T-cell (primary cell): ENCODE measurements at regions of chr11 and their contacts with region 1.

Region 1: GRCh38 chr11:73705053-73705452 is 55.8 kb downstream of the RAB6A start:
- DNase-seq: no peak
- ATAC-seq: no peak
- H3K4me3 ChIP-seq: no peak overlapping the region
- H3K4me3 Mint-ChIP-seq: no peak overlapping the region
- H3K27ac ChIP-seq: no peak overlapping the region
- H3K27ac Mint-ChIP-seq: no peak overlapping the region
- H3K4me1 ChIP-seq: no peaks in the 10 kb centered on the region
- H3K4me1 Mint-ChIP-seq: no peaks in the 10 kb centered on the region
- H3K27me3 ChIP-seq: no peaks in the 10 kb centered on the region
- H3K27me3 Mint-ChIP-seq: no peaks in the 10 kb centered on the region

Region 2: DNA sequence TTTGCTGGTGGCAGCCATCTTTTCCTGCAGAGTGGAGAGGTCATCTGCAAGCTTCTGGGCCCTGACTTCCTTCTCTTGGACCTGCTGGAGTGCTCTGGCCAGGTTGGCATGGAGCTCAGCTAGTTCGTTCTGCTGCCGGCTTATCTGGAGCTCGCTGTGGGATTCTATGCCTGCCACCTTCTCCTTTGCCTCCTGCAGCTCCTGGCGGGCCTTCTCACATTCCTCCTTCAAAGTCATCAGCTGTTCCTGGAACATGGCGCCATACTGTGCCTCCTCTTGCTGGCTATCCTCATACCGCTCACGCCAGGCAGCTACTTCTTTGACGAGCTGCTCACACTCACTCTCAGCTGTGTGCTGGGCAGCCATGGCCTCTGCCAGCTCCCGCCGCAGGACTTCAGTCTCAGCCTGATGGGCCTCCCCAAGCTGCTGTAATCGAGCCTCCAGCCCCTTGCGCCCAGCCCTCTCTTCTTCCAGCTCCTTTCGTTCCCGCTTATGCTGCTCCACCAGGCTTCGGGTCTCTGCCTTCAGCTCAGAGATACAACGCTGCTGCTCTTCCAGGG is 1690.2 kb before region 1 on chr11:
- CTCF ChIA-PET with region 1: interaction called in 1 of 2 experiments, 10 read pairs
- POLR2A ChIA-PET with region 1: no interaction called
- DNase-seq: no peak
- ATAC-seq: no peak
- H3K4me3 ChIP-seq: no peak overlapping the region
- H3K4me3 Mint-ChIP-seq: no peak overlapping the region
- H3K27ac ChIP-seq: no peak overlapping the region
- H3K27ac Mint-ChIP-seq: no peak overlapping the region
- H3K4me1 ChIP-seq: peaks cover 0 to 4% of the 10 kb centered on the region in 2 experiments
- H3K4me1 Mint-ChIP-seq: peaks cover 0 to 30% (median 2%) of the 10 kb centered on the region in 3 donors
- H3K27me3 ChIP-seq: no peaks in the 10 kb centered on the region
- H3K27me3 Mint-ChIP-seq: no peaks in the 10 kb centered on the region

Region 3: GRCh38 chr11:73652046-73652730 is 52.9 kb before region 1 on chr11:
- CTCF ChIA-PET with region 1: no interaction called
- POLR2A ChIA-PET with region 1: no interaction called
- DNase-seq: no peak
- ATAC-seq: no peak
- H3K4me3 ChIP-seq: no peak overlapping the region
- H3K4me3 Mint-ChIP-seq: no peak overlapping the region
- H3K27ac ChIP-seq: no peak overlapping the region
- H3K27ac Mint-ChIP-seq: peak overlapping the region in 1 of 2 donors; percentile 5
- H3K4me1 ChIP-seq: peaks cover 3 to 16% of the 10 kb centered on the region in 2 experiments
- H3K4me1 Mint-ChIP-seq: peaks cover 18 to 20% (median 19%) of the 10 kb centered on the region in 3 donors
- H3K27me3 ChIP-seq: no peaks in the 10 kb centered on the region
- H3K27me3 Mint-ChIP-seq: no peaks in the 10 kb centered on the region

Region 4: DNA sequence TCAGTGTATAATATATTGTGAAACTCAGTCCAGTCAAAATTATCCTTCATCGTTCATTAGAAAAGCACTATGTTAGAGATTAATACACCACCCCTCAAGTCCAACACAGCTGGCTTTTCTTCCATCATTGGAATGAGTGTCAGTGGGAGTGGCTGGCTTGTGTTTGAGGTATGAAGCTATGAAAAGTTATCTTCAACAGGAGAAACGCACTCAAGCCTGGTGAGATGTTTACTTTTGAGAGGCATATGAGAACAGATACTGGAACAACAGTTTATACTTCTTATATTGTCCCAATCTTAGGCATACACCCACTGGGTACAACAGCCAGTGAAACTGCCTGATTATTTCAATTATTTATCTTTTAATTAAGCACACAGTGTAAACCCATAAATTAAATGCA is 24.4 kb before region 1 on chr11:
- CTCF ChIA-PET with region 1: no interaction called
- POLR2A ChIA-PET with region 1: no interaction called
- DNase-seq: no peak
- ATAC-seq: no peak
- H3K4me3 ChIP-seq: no peak overlapping the region
- H3K4me3 Mint-ChIP-seq: no peak overlapping the region
- H3K27ac ChIP-seq: no peak overlapping the region
- H3K27ac Mint-ChIP-seq: no peak overlapping the region
- H3K4me1 ChIP-seq: no peaks in the 10 kb centered on the region
- H3K4me1 Mint-ChIP-seq: no peaks in the 10 kb centered on the region
- H3K27me3 ChIP-seq: no peaks in the 10 kb centered on the region
- H3K27me3 Mint-ChIP-seq: no peaks in the 10 kb centered on the region